ENCODE measurements at regions of chr18 and their contacts with region 1.

Region 1: GRCh38 chr18:50287441-50288347 is at the start of gene CXXC1:
- DNase-seq: peak; percentile 97 to 98
- H3K4me3 ChIP-seq: peak within 1 kb of the TSS; percentile 70 to 91
- H3K27ac ChIP-seq: peak within 1 kb of the TSS; percentile 90 to 91
- H3K4me1 ChIP-seq: peaks cover 0 to 9% (median 7%) of the 10 kb centered on the region in 4 donors
- H3K27me3 ChIP-seq: peaks cover 0 to 7% of the 10 kb centered on the region in 2 donors
- CTCF ChIP-seq: peak; percentile 44 to 63

Region 2: GRCh38 chr18:49813319-49814146 is 474.2 kb before region 1 on chr18 and contains the start of gene ACAA2:
- intact Hi-C with region 1: loop called (anchors 10 kb)
- DNase-seq: peak; percentile 78 to 93
- H3K4me3 ChIP-seq: peak within 1 kb of the TSS; percentile 71 to 76
- H3K27ac ChIP-seq: peak within 1 kb of the TSS; percentile 93 to 97
- H3K4me1 ChIP-seq: peaks cover 0 to 14% (median 5%) of the 10 kb centered on the region in 4 donors
- H3K27me3 ChIP-seq: no peaks in the 10 kb centered on the region
- CTCF ChIP-seq: no peak